ENCODE measurements at regions of chr18 and their contacts with region 1.

Region 1: GRCh38 chr18:14086458-14087231 is 45.6 kb downstream of the ZNF519 start:
- DNase-seq: peak; percentile 47
- ATAC-seq: peak; percentile 88
- H3K4me3 Mint-ChIP-seq: no peak overlapping the region
- H3K27ac Mint-ChIP-seq: no peak overlapping the region
- H3K4me1 Mint-ChIP-seq: peaks cover 10% of the 10 kb centered on the region
- H3K27me3 Mint-ChIP-seq: no peaks in the 10 kb centered on the region
- CTCF ChIP-seq: peak; percentile 66

Region 2: DNA sequence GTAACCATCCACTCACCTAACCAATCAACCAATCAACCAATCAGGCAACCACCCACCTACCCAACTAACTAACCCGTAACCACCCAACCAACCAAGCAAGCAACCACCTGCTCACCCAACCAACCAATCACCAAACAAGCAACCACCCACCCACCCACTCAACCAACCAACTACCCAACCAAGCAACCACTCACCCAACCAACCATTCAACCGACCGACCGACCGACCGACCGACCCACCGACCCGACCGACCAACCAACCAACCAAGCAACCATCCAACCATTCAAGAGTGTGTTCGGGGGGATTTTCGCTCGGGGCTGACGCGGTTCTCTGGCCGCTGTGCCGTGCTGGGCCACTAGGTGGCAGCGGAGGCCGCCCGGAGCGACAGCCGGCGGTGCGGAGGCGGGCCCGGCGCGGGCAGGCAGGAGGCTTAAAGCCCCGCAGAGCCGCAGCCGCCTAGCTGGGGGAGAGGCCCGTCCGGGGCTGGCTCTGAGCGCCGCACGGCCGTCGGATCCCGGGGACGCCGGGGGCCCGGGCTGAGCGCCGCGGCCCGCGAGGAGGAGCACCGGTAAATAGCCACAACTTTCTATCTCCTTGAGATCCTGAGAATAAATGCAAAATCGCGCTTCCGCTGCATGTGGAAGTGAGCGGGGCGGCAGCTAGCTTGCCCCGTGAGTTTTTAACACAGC is 262.8 kb before region 1 on chr18 and contains the start of gene MC5R:
- CTCF ChIA-PET with region 1: interaction called, 41 read pairs
- POLR2A ChIA-PET with region 1: no interaction called
- DNase-seq: peak; percentile 82
- ATAC-seq: peak; percentile 96
- H3K4me3 Mint-ChIP-seq: peak within 1 kb of the TSS; percentile 58
- H3K27ac Mint-ChIP-seq: no peak within 1 kb of the TSS
- H3K4me1 Mint-ChIP-seq: no peaks in the 10 kb centered on the region
- H3K27me3 Mint-ChIP-seq: peaks cover 20% of the 10 kb centered on the region
- CTCF ChIP-seq: peak; percentile 86
- total RNA-seq, gene MC5R: 0.14 to 0.27 TPM (median 0.15 TPM) in 3 replicates

Region 3: DNA sequence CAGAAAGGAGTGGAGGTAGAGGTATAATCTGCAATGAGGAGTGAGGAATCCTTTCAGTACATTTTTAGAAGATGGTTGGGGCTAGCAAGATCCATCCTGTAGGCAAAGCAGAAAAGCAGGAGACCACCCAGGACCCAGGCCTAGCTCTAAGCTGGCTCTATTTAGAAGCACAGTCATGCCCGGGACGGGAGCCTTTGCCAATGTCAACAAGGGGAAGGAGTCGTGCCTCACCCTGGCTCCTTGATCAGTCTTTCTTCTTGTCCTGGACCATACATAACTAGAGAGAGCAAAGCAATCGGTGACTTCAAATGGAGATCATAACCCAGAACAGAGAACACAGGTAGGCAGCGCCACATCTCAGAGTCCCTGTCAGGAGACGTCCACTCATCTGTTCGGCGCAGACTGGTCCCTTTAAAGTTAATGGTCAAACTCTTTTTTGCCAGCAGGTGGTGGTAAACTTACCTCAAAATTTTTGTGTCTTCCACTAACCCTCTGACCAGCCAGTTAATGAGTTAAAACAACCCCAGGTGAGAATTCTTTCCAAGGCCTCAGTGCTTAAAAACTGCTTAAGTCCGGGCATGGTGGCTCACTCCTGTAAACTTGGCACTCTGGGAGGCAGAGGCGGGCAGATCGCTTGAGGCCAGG is 254.7 kb before region 1 on chr18:
- CTCF ChIA-PET with region 1: interaction called, 29 read pairs
- POLR2A ChIA-PET with region 1: no interaction called
- DNase-seq: no peak
- ATAC-seq: peak; percentile 80
- H3K4me3 Mint-ChIP-seq: no peak overlapping the region
- H3K27ac Mint-ChIP-seq: no peak overlapping the region
- H3K4me1 Mint-ChIP-seq: peaks cover 15% of the 10 kb centered on the region; the same call in 1 of the 2 replicates
- H3K27me3 Mint-ChIP-seq: no peaks in the 10 kb centered on the region
- CTCF ChIP-seq: no peak

Measured in WTC11 (cell line).